B cell (primary cell): ENCODE measurements at regions of chr6 and their contacts with region 1.

Region 1: GRCh38 chr6:8658416-8658815 is 223.1 kb upstream of the SLC35B3 start:
- DNase-seq: no peak
- ATAC-seq: no peak
- H3K4me3 ChIP-seq: no peak overlapping the region
- H3K4me3 Mint-ChIP-seq: no peak overlapping the region
- H3K27ac ChIP-seq: no peak overlapping the region
- H3K27ac Mint-ChIP-seq: no peak overlapping the region
- H3K4me1 ChIP-seq: no peaks in the 10 kb centered on the region
- H3K4me1 Mint-ChIP-seq: no peaks in the 10 kb centered on the region
- H3K27me3 ChIP-seq: no peaks in the 10 kb centered on the region
- H3K27me3 Mint-ChIP-seq: no peaks in the 10 kb centered on the region
- CTCF ChIP-seq: no peak

Region 2: DNA sequence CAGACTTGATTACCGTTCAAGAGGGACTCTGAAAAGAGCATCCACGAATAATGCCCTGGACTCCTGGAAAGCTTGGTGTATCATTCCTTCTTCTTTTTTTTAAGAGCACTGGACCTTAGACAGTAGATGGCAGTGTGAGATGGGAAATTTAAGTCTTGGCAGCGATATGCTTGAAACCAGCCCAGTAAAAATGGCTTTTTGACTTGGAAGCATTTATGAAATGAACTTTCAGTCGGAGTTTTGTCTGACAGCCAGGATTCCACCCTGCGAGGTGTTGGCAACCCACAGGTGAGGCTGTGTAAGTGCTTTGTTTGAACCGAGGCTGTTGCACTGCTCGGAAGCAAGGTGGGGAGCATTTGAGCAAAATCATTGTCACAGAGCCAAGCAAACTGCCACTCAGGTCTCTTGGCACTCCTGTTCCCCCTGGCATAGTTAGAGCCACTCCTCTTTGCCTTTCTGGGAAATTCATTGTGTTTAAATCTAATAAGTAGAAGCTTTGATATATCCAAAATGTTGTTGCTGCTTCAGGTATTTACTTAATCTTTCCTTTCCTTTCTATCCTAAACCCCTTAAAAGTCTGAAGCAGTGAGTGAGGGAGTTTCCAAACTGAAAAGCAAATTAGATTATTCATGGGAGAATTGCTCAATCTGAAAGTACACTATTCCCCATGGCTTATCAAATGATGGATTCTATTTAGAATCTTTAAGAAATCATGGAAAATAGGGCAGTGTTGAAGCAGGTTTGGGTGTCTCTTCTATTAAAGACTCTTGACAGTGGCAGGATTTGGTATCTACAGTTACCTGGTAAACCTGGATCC is 49.7 kb after region 1 on chr6:
- CTCF ChIA-PET with region 1: no interaction called
- POLR2A ChIA-PET with region 1: no interaction called
- intact Hi-C with region 1: loop called (anchors 2 kb)
- DNase-seq: no peak
- ATAC-seq: no peak
- H3K4me3 ChIP-seq: no peak overlapping the region
- H3K4me3 Mint-ChIP-seq: no peak overlapping the region
- H3K27ac ChIP-seq: no peak overlapping the region
- H3K27ac Mint-ChIP-seq: no peak overlapping the region
- H3K4me1 ChIP-seq: no peaks in the 10 kb centered on the region
- H3K4me1 Mint-ChIP-seq: no peaks in the 10 kb centered on the region
- H3K27me3 ChIP-seq: no peaks in the 10 kb centered on the region
- H3K27me3 Mint-ChIP-seq: no peaks in the 10 kb centered on the region
- CTCF ChIP-seq: no peak